BJ (cell line): ENCODE measurements at regions of chr6 and their contacts with region 1.

Region 1: DNA sequence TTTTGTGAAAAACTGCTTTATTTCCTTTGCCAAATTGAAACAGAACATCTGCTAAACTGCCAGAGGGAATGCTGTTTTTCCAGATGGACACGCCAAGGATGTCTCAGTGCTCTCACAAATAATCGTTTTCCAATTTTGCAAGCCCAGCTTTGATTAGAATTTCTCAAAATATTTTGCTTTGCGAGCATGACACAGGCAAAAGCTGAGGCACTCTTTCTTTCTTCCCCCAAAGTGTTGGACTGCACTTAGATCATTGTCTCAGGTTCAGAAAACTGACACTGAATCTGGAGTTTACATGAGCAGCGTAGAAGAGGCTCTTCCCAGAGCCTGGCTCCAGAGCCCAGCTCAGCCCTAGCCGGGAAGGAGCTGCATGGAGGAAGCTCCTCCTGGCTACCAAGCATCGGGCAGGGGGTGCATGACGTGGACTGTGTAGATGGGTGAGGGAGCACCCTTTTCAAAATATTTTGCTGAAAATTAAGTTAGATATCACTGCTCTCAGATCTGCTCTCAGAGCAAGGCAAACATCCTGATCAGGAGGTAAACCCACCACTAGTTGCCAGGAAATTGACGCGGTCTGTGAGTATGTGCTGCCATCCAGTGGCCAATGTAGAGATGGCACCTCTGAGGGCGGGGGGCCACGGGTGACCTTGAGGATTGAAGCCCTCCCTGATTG is 107.5 kb downstream of the SLC22A3 start:
- DNase-seq: peak; percentile 15
- H3K4me3 ChIP-seq: peak overlapping the region; percentile 16
- H3K27me3 ChIP-seq: no peaks in the 10 kb centered on the region
- CTCF ChIP-seq: peak; percentile 93

Region 2: GRCh38 chr6:159862103-159862502 is 593.6 kb before region 1 on chr6:
- CTCF ChIA-PET with region 1: interaction called, 24 read pairs
- POLR2A ChIA-PET with region 1: no interaction called
- DNase-seq: no peak
- H3K4me3 ChIP-seq: no peak overlapping the region
- H3K27me3 ChIP-seq: peaks cover 4% of the 10 kb centered on the region; the same call in 1 of the 2 replicates
- CTCF ChIP-seq: no peak

Region 3: DNA sequence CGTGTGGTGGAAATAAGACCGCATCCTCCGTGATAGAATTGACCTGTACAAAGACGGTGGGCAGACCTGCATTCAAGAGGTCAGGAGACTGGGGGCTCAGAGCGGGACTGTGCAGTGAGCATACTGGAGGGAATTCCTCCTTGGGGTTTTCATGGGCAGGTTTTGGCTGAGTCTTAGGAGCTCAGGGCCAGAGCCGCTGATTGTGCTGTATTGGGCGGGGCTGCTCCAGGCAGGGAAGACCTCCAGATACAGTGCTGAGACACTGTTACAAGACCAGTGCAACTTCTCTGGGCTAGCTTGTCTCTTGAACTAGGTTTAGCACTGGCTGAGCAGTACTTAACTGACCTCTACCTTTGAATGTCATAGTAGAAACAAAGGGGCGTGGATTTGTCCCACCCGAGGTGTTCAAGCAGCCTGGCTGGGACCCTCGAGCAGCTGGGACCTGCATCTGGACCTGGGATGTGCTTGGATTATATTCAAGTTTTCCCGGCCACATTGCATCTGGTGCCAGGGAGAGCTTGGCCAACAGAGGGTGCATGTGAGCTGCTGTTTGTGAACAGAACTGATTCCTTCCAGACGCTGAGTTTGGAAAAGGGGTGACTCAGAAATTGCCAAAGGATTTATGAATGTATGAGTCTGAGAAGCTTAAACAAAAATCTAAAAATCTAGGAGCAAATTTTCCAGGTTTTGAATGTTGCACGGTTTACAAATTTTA is 367.5 kb before region 1 on chr6:
- CTCF ChIA-PET with region 1: interaction called, 90 read pairs
- POLR2A ChIA-PET with region 1: no interaction called
- DNase-seq: peak; percentile 73
- H3K4me3 ChIP-seq: no peak overlapping the region
- H3K27me3 ChIP-seq: no peaks in the 10 kb centered on the region
- CTCF ChIP-seq: peak; percentile 95

Region 4: GRCh38 chr6:160102956-160103824 is 352.5 kb before region 1 on chr6:
- CTCF ChIA-PET with region 1: interaction called, 13 read pairs
- POLR2A ChIA-PET with region 1: no interaction called
- DNase-seq: no peak
- H3K4me3 ChIP-seq: no peak overlapping the region
- H3K27me3 ChIP-seq: no peaks in the 10 kb centered on the region
- CTCF ChIP-seq: peak; percentile 50

Region 5: GRCh38 chr6:160137989-160138835 is 317.5 kb before region 1 on chr6:
- CTCF ChIA-PET with region 1: interaction called, 75 read pairs
- POLR2A ChIA-PET with region 1: no interaction called
- DNase-seq: peak; percentile 13
- H3K4me3 ChIP-seq: no peak overlapping the region
- H3K27me3 ChIP-seq: no peaks in the 10 kb centered on the region
- CTCF ChIP-seq: peak; percentile 79

Region 6: DNA sequence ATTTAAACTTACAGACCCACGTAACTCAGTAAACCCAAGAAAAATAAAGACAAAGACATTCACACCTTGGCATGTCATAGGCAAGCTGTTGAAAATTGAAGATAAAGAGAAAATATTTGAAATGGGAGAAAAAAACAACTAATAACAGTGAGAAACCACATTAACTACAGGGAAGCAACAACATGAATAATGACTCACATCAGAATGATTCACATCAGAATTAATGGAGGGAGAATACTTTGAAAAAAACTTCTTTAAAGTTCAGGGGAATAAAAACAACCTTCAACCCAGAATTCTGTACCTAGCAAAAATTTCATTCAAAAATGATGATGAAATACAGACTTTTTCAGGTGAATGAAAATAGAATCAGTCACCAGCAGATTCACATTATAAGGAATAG is 140.4 kb before region 1 on chr6:
- CTCF ChIA-PET with region 1: no interaction called
- POLR2A ChIA-PET with region 1: no interaction called
- DNase-seq: no peak
- H3K4me3 ChIP-seq: no peak overlapping the region
- H3K27me3 ChIP-seq: no peaks in the 10 kb centered on the region
- CTCF ChIP-seq: no peak

Region 7: DNA sequence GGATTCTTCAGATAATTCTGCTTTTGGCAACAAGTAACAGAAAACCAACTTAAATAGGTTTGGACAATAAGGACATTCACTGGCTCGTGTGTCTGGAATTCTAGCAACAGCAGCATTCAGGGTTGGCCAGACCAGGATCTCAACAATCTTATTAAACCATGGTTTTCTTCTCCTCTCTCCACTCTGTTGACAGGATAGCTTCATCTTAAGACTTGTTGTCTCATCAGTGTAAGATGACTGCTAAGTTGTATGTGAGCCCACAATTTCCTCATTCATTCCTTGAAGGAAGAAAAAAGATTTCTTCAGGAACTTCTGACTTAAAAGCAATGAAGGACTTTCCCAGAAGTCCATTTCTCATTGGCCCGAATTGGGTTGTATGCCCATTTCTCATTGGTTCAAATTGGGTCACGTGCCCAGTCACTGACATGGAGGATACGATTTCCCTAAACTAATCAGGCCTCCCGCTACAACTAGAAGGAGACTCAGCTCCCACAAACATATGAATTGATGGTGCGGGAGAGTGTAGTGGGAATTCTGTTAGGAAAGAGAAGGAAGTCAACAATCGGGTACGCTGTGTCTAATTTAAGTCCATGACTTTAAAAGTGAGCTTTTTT is 23.8 kb before region 1 on chr6:
- CTCF ChIA-PET with region 1: interaction called, 22 read pairs
- POLR2A ChIA-PET with region 1: no interaction called
- DNase-seq: no peak
- H3K4me3 ChIP-seq: no peak overlapping the region
- H3K27me3 ChIP-seq: no peaks in the 10 kb centered on the region
- CTCF ChIP-seq: no peak

Region 8: GRCh38 chr6:160500639-160501038 is 45.0 kb after region 1 on chr6:
- CTCF ChIA-PET with region 1: no interaction called
- POLR2A ChIA-PET with region 1: no interaction called
- DNase-seq: no peak
- H3K4me3 ChIP-seq: no peak overlapping the region
- H3K27me3 ChIP-seq: no peaks in the 10 kb centered on the region
- CTCF ChIP-seq: no peak

Region 9: GRCh38 chr6:160534050-160534696 is 78.5 kb after region 1 on chr6:
- CTCF ChIA-PET with region 1: interaction called, 10 read pairs
- POLR2A ChIA-PET with region 1: no interaction called
- DNase-seq: no peak
- H3K4me3 ChIP-seq: no peak overlapping the region
- H3K27me3 ChIP-seq: no peaks in the 10 kb centered on the region
- CTCF ChIP-seq: peak; percentile 89